ENCODE measurements at regions of chr13 and their contacts with region 1.

Region 1: GRCh38 chr13:79541426-79542049 is 60.6 kb downstream of the NDFIP2 start:
- DNase-seq: peak; percentile 79
- H3K4me3 ChIP-seq: no peak overlapping the region
- H3K27ac ChIP-seq: no peak overlapping the region
- H3K4me1 ChIP-seq: no peaks in the 10 kb centered on the region
- H3K27me3 ChIP-seq: no peaks in the 10 kb centered on the region
- CTCF ChIP-seq: peak; percentile 33 to 50
- POLR2A ChIP-seq: no peak

Region 2: GRCh38 chr13:78978381-78978998 is 563.0 kb before region 1 on chr13:
- CTCF ChIA-PET with region 1: interaction called, 9 read pairs
- POLR2A ChIA-PET with region 1: no interaction called
- dilution Hi-C with region 1: no loop called
- intact Hi-C with region 1: loop called (anchors 10 kb)
- DNase-seq: peak; percentile 70
- H3K4me3 ChIP-seq: no peak overlapping the region
- H3K27ac ChIP-seq: no peak overlapping the region
- H3K4me1 ChIP-seq: no peaks in the 10 kb centered on the region
- H3K27me3 ChIP-seq: no peaks in the 10 kb centered on the region
- CTCF ChIP-seq: peak; percentile 43 to 59
- POLR2A ChIP-seq: no peak

Region 3: GRCh38 chr13:79413521-79413920 is 128.0 kb before region 1 on chr13:
- CTCF ChIA-PET with region 1: interaction called, 41 read pairs
- POLR2A ChIA-PET with region 1: no interaction called
- dilution Hi-C with region 1: no loop called
- intact Hi-C with region 1: loop called (anchors 5 kb)
- DNase-seq: no peak
- H3K4me3 ChIP-seq: no peak overlapping the region
- H3K27ac ChIP-seq: no peak overlapping the region
- H3K4me1 ChIP-seq: no peaks in the 10 kb centered on the region
- H3K27me3 ChIP-seq: no peaks in the 10 kb centered on the region
- CTCF ChIP-seq: no peak
- POLR2A ChIP-seq: no peak

Region 4: GRCh38 chr13:79457948-79458347 is 83.6 kb before region 1 on chr13:
- CTCF ChIA-PET with region 1: interaction called, 17 read pairs
- POLR2A ChIA-PET with region 1: no interaction called
- dilution Hi-C with region 1: no loop called
- intact Hi-C with region 1: no loop called
- DNase-seq: peak; percentile 79
- H3K4me3 ChIP-seq: no peak overlapping the region
- H3K27ac ChIP-seq: peak overlapping the region; percentile 5
- H3K4me1 ChIP-seq: peaks cover 9% of the 10 kb centered on the region
- H3K27me3 ChIP-seq: no peaks in the 10 kb centered on the region
- CTCF ChIP-seq: no peak
- POLR2A ChIP-seq: no peak

Region 5: DNA sequence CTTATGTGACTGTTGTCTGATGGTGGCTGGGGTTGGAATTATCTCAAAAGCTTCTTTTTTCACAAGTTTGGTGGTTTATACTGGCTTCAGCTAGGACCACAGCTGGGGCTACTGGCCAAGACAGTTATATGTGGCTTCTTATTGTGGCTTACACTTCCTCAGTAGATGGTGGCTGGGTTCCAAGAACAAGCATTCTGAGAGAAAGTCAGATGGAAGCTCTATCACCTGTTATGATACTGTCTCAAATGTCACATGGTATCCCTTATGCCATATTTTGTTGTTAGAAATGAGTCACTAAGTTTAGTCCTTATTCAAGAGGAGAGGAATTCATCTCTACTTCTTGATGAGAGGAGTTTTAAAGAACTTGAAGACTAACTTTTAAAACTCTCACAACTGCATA is 19.0 kb before region 1 on chr13:
- CTCF ChIA-PET with region 1: interaction called, 10 read pairs
- POLR2A ChIA-PET with region 1: no interaction called
- dilution Hi-C with region 1: no loop called
- intact Hi-C with region 1: no loop called
- DNase-seq: peak; percentile 44
- H3K4me3 ChIP-seq: no peak overlapping the region
- H3K27ac ChIP-seq: no peak overlapping the region
- H3K4me1 ChIP-seq: peaks cover 27% of the 10 kb centered on the region
- H3K27me3 ChIP-seq: no peaks in the 10 kb centered on the region
- CTCF ChIP-seq: no peak
- POLR2A ChIP-seq: no peak

Measured in endothelial cell of umbilical vein (primary cell).